PC-9 (cell line): ENCODE measurements at regions of chr17 and their contacts with region 1.

Region 1: DNA sequence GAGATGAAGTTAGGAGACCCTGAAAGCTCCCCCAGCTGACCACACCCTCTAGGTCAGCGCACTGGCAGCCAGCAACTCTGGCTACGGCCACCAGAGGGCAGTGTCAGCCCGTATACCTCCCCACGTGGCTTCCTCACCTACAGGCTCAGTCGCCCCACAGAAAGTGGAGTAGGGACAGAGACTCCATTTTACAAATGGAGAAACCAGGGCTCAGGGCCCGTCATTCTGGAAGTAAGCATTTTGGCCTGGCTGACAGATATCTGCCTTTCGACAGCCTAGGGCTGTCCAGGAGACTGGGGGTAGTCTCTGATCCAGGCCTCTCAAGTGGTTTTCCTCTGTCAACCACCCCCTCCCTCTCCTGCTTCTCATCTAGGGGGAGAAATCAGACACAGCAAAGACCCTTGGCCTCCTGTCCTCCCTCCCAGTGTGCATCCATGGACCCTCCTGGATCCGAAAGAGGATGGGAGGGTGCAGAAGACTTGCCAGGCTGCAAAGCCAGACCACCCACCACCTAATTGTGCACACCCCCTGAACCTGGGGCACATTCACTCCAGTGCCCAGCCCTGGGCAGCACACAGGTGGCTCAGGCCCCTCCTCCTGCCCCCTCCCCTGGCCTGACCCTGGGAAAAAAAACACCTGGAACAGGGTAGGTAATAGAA is 3.8 kb upstream of the HAP1 start:
- DNase-seq: peak; percentile 56 to 79
- H3K4me3 ChIP-seq: no peak overlapping the region
- H3K27ac ChIP-seq: 0 out of 2 replicates have a peak overlapping the region, but pooled peaks have one; percentile 11
- H3K4me1 ChIP-seq: peaks cover 42% of the 10 kb centered on the region
- H3K27me3 ChIP-seq: peaks cover 22% of the 10 kb centered on the region; the same call in 1 of the 2 replicates
- CTCF ChIP-seq: peak; percentile 97

Region 2: DNA sequence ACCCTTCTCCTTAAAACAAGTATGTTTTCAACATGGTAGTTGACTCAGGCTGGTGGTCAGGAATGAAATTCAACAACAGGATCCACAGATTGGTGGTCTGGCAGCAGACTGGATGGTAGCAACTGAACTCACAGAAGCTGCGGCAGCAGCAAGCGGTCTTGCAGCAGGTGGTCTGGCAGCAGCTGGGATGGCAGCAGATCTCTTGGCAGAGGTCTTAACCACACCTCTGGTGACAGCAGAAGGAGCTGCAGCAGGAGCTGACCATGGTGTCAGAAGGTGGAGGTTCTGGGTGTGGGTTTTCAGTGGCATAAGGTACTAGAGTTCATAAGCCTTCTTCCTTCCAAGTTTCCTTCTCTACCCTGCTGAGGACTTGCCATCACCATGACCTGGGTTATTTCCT is 551.3 kb before region 1 on chr17:
- CTCF ChIA-PET with region 1: no interaction called
- POLR2A ChIA-PET with region 1: no interaction called
- intact Hi-C with region 1: no loop called
- DNase-seq: no peak
- H3K4me3 ChIP-seq: no peak overlapping the region
- H3K27ac ChIP-seq: no peak overlapping the region
- H3K4me1 ChIP-seq: no peaks in the 10 kb centered on the region
- H3K27me3 ChIP-seq: no peaks in the 10 kb centered on the region
- CTCF ChIP-seq: no peak

Region 3: DNA sequence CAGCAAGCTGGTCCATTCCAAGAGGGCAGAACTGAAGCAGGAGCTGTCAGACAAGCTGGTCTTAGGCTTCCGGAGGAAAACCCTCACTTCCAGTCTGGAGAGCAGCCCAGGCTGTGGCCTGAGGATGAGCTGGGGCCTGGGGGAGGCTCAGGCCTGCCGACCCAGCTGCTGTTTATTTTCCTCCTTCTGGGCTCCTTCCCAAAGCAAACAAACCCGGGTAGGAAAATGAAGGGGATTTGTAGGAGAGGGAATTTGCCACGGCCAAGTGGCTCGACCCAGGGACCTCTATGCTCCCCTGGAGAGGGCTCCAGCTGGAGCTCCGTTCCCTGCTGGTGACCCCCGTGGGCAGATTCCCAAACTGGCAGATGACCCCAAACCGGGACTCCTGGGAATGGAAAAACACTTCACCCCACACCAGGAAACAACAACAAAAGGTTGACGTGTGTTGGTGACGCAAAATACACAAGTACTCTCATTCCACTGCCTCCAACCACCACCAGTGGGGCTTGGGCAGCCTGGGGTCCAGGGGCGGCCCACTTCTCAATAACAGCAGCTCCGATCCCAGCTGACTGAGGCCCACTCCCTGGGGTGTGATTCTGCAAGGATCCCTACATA is 39.5 kb after region 1 on chr17:
- CTCF ChIA-PET with region 1: no interaction called
- POLR2A ChIA-PET with region 1: interaction called, 4 read pairs
- intact Hi-C with region 1: loop called (anchors 2 kb)
- DNase-seq: peak; percentile 51 to 58
- H3K4me3 ChIP-seq: no peak overlapping the region
- H3K27ac ChIP-seq: peak overlapping the region; percentile 49
- H3K4me1 ChIP-seq: peaks cover 56% of the 10 kb centered on the region
- H3K27me3 ChIP-seq: no peaks in the 10 kb centered on the region
- CTCF ChIP-seq: no peak

Region 4: DNA sequence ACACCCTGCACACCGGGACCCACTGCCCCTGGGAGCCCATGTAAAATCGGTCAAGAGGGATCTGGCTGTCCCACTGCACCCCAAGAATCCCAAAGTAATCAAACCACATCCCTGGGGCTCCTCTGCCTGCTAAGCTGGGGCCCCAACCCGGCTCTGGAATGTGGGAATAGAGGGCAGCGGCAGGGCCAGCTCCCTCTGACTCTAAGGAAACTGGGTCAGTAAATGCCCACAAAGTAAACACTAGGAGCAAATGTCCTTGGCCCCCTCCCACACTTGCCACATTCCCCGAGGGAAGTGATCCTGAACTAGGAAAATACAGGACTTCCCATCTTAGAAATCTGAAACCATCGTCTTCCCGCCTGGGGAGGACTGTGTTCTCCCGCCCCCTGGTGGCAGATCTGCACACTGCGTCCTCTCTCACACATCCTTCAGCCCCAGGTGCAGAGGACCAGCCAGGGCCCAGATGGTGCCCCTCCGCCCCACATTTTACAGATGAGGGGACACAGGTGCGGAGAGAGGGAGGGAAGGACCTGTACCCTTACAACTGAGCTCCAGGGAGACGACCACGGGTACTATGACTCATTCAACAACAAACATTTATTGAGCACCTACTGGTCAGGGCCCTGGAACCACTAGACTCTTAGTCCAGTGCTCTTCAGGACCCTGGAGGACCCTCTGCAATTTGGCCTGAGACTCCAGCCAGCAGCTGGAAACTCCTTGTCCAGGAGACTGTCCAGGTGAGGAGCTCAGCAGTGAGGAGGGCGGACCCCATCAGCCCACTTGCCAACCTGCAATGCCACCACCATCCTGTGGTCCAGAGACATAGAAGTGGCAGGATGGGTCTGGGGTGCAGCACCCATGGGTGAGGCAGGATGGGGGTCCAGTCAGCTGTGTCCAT is 63.4 kb after region 1 on chr17:
- CTCF ChIA-PET with region 1: interaction called, 9 read pairs
- POLR2A ChIA-PET with region 1: no interaction called
- intact Hi-C with region 1: loop called (anchors 1 kb)
- DNase-seq: peak; percentile 84 to 87
- H3K4me3 ChIP-seq: peak overlapping the region; percentile 35; the same call in 1 of the 2 replicates
- H3K27ac ChIP-seq: peak overlapping the region; percentile 86
- H3K4me1 ChIP-seq: peaks cover 24% of the 10 kb centered on the region
- H3K27me3 ChIP-seq: no peaks in the 10 kb centered on the region
- CTCF ChIP-seq: peak; percentile 98

Region 5: GRCh38 chr17:41885733-41886132 is 147.5 kb after region 1 on chr17:
- CTCF ChIA-PET with region 1: no interaction called
- POLR2A ChIA-PET with region 1: no interaction called
- intact Hi-C with region 1: loop called (anchors 5 kb)
- DNase-seq: no peak
- H3K4me3 ChIP-seq: no peak overlapping the region
- H3K27ac ChIP-seq: no peak overlapping the region
- H3K4me1 ChIP-seq: no peaks in the 10 kb centered on the region
- H3K27me3 ChIP-seq: no peaks in the 10 kb centered on the region
- CTCF ChIP-seq: peak; percentile 56; the same call in 1 of the 2 replicates